ENCODE measurements at regions of chr15 and their contacts with region 1.

Region 1: DNA sequence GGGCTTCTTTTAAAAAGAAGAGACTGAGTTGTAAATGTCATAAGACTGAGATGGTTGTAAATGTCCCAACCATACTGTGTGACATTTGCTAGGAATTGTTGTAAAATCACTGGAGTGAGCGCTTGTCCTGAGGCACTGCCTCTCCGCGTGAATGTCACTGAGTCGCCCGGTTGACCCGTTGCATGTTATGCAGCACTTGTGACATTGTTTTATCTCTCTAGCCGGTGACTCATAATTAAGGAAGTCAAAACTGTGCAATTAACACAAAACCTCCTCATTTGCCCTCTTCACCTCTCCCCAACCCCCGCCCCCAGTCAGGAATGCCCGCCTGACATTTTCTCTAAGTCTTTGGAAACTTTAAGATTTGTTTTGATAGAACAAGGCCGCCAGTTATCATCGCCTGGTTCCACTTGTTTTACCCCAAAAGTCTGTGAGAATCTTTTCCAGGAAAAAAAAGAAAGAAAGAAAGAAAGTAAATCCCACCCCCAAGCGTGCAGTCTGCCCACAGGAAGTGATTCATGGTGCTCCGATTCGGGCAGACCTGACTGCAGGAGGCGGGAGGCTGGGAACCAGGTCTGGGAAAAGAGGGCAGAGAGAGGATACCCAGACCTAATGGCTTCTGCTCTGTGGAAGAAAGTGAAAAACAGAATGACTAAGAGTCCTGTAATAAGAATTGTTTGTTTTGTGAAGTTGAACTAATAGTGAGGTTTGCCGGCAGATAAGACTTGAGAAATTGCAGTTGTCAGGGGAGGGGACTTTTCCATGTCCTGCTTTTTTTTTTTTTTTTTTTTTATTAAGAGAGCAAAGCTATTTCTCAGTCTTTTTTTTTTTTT is 84.8 kb downstream of the SMAD3 start:
- DNase-seq: peak; percentile 80
- H3K4me3 Mint-ChIP-seq: peak overlapping the region; percentile 73
- H3K27ac Mint-ChIP-seq: peak overlapping the region; percentile 86
- H3K4me1 Mint-ChIP-seq: peaks cover 67% of the 10 kb centered on the region
- H3K27me3 Mint-ChIP-seq: no peaks in the 10 kb centered on the region

Region 2: GRCh38 chr15:67094001-67094826 is 56.0 kb before region 1 on chr15:
- intact Hi-C with region 1: no loop called
- DNase-seq: no peak
- H3K4me3 Mint-ChIP-seq: no peak overlapping the region
- H3K27ac Mint-ChIP-seq: peak overlapping the region; percentile 95
- H3K4me1 Mint-ChIP-seq: peaks cover 93% of the 10 kb centered on the region
- H3K27me3 Mint-ChIP-seq: no peaks in the 10 kb centered on the region

Region 3: DNA sequence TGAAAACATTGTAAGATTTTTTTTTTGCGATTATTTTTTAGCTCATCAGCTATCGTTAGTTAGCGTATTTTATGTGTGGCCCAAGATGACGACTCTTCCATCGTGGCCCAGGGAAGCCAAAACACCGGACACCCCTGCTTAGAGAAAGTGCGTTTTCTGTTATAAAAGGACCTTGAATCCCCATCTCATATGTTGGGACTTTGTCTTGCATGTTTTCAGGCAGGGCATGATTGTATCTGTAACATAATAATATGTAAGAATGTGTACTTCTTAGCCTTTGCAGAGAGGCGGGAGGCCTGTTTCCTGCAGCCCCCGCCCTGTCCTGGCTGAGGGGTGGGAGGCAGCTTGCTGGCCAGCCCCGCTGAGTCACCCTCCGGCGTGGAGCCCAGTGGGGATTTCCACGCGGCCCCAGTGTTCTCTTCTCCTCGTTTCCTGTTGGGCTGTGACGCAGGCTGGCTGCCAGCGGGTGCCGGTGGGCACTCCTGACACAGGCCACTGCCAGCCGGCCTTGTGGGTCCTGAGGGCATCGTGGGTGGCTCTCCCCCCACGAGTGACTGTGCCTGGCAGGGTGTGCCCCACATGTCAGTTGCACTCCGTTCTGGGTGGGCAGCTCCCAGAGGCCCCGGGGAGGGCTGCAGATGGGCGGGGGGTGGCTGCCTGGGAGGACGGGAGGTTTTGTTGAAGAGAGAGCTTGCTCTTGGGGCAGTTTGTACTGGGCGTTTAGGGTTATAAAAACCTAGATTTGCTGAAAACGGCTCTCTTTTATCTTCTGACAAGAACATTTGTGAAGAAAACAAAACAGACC is 29.2 kb before region 1 on chr15:
- intact Hi-C with region 1: loop called (anchors 1 kb)
- DNase-seq: peak; percentile 96
- H3K4me3 Mint-ChIP-seq: peak overlapping the region; percentile 87
- H3K27ac Mint-ChIP-seq: peak overlapping the region; percentile 99
- H3K4me1 Mint-ChIP-seq: peaks cover 86% of the 10 kb centered on the region
- H3K27me3 Mint-ChIP-seq: no peaks in the 10 kb centered on the region

Region 4: GRCh38 chr15:67134067-67134838 is 16.0 kb before region 1 on chr15:
- intact Hi-C with region 1: loop called (anchors 2 kb)
- DNase-seq: peak; percentile 92
- H3K4me3 Mint-ChIP-seq: peak overlapping the region; percentile 80
- H3K27ac Mint-ChIP-seq: peak overlapping the region; percentile 92
- H3K4me1 Mint-ChIP-seq: peaks cover 81% of the 10 kb centered on the region
- H3K27me3 Mint-ChIP-seq: no peaks in the 10 kb centered on the region

Region 5: DNA sequence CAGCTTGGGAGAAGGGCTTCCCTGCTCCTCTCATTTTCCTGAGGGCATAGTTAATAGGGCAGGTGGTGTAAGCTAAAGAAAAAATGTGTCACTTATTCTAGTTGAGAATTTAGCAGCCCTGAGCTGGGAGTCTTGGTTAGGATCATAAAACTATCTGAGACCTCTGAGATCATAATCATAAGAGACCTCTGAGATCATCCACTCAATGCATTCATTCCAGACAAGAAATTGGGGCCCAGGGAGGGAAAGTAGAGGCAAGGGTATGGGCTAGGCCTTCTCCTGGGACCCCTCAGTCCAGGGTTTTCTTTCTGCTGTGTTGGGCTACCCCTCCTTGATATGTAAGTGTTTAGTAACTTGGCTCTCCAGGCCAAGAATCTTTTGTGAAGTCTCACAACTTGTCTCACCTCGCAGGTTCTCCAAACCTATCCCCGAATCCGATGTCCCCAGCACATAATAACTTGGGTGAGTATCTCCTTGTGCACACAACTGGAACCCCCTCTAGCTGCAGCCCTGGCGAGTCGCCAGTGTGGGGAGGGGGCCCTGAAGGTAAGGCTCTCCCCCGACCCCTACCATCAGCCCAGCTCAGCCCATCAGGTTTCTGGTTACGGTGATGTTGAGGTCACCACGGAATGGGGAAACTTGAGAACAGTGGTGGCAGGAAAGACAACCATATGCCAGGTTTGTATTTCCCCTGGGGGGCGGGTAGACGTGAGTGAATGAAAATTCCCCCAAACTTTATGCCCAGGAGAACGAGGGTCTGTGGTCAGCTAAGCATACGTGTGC is 20.1 kb after region 1 on chr15:
- intact Hi-C with region 1: loop called (anchors 1 kb)
- DNase-seq: no peak
- H3K4me3 Mint-ChIP-seq: no peak overlapping the region
- H3K27ac Mint-ChIP-seq: peak overlapping the region; percentile 74
- H3K4me1 Mint-ChIP-seq: peaks cover 55% of the 10 kb centered on the region
- H3K27me3 Mint-ChIP-seq: no peaks in the 10 kb centered on the region

Region 6: GRCh38 chr15:67175643-67176071 is 25.4 kb after region 1 on chr15:
- intact Hi-C with region 1: loop called (anchors 1 kb)
- DNase-seq: peak; percentile 71
- H3K4me3 Mint-ChIP-seq: peak overlapping the region; percentile 24
- H3K27ac Mint-ChIP-seq: peak overlapping the region; percentile 82
- H3K4me1 Mint-ChIP-seq: peaks cover 63% of the 10 kb centered on the region
- H3K27me3 Mint-ChIP-seq: no peaks in the 10 kb centered on the region

Measured in activated CD4-positive, alpha-beta T cell treated with anti-CD3 and anti-CD28 coated beads, Interleukin-2, amount 10 ng/mL, durations not matched to agents 24 days and 14 days (primary cell).